ENCODE measurements at regions of chr6 and their contacts with region 1.

Region 1: GRCh38 chr6:33812669-33813068 is 8.9 kb upstream of the MLN start:
- DNase-seq: peak; percentile 69 to 85
- H3K4me3 ChIP-seq: no peak overlapping the region
- H3K4me3 Mint-ChIP-seq: no peak overlapping the region
- H3K27ac Mint-ChIP-seq: no peak overlapping the region
- H3K4me1 ChIP-seq: no peaks in the 10 kb centered on the region
- H3K4me1 Mint-ChIP-seq: no peaks in the 10 kb centered on the region
- H3K27me3 ChIP-seq: no peaks in the 10 kb centered on the region
- H3K27me3 Mint-ChIP-seq: peaks cover 29% of the 10 kb centered on the region
- CTCF ChIP-seq: peak; percentile 28 to 63

Region 2: DNA sequence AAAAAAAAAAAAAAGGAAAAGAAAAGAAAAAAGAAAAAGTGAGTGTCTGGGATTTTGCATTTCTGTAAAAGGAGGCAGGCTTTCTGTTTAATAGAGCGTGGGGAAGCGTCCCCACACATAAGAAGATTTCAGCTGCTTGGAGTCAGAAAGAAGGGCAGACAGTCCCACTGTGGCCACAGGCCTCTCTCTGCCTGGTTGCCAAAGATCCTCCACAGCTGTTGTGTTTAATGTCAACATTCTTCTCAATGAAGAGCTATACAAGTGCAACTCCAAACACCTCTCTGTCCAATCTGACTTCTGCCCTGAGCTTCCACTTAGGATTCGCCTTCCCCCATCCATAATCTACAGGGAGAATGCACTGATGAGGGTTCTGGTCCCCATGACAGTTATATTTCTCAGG is 55.5 kb after region 1 on chr6:
- CTCF ChIA-PET with region 1: no interaction called
- POLR2A ChIA-PET with region 1: interaction called, 15 read pairs
- intact Hi-C with region 1: no loop called
- DNase-seq: no peak
- H3K4me3 ChIP-seq: no peak overlapping the region
- H3K4me3 Mint-ChIP-seq: no peak overlapping the region
- H3K27ac Mint-ChIP-seq: no peak overlapping the region
- H3K4me1 ChIP-seq: peaks cover 7% of the 10 kb centered on the region
- H3K4me1 Mint-ChIP-seq: no peaks in the 10 kb centered on the region
- H3K27me3 ChIP-seq: no peaks in the 10 kb centered on the region
- H3K27me3 Mint-ChIP-seq: peaks cover 2% of the 10 kb centered on the region
- CTCF ChIP-seq: no peak

Region 3: GRCh38 chr6:34132486-34133185 is 320.0 kb after region 1 on chr6:
- CTCF ChIA-PET with region 1: no interaction called
- POLR2A ChIA-PET with region 1: no interaction called
- intact Hi-C with region 1: loop called (anchors 10 kb)
- DNase-seq: peak; percentile 55 to 81
- H3K4me3 ChIP-seq: no peak overlapping the region
- H3K4me3 Mint-ChIP-seq: no peak overlapping the region
- H3K27ac Mint-ChIP-seq: no peak overlapping the region
- H3K4me1 ChIP-seq: no peaks in the 10 kb centered on the region
- H3K4me1 Mint-ChIP-seq: no peaks in the 10 kb centered on the region
- H3K27me3 ChIP-seq: no peaks in the 10 kb centered on the region; the same call in 1 of the 2 replicates
- H3K27me3 Mint-ChIP-seq: peaks cover 15% of the 10 kb centered on the region
- CTCF ChIP-seq: no peak

Measured in Caco-2 (cell line).